ENCODE measurements at regions of chr19 and their contacts with region 1.

Region 1: DNA sequence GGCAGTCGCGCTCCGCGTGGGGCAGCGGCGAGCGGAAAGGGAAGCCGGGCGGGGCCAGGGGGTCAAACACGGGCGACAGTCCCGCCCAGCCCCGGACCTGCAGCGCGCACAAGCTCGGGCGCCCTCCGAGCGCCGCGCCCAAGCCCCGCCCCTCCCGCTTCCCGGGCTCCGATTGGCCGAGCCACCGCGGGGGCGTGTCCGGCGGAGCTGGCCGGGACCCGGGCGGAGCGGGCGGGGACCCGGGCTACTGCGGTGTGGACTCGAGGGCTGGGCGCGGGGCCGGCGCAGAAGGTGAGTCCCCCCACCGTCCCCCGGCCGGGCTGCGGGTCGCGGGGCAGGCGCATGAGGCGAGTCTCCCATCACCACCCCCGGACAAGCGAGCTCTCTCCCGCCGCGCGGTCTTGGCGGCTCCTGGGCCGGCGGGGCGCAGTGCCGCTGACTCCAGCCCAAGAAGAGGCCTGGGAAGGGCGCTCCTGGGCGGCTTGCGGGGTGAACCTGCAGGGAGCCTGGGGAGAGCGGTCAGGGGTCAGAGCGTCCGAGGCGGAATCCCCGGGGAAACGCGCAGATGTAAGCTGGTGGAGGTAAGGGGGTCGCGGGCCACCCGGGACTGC is at the start of gene PLEKHF1:
- DNase-seq: peak; percentile 89
- ATAC-seq: peak; percentile 88
- H3K4me3 Mint-ChIP-seq: peak within 1 kb of the TSS; percentile 86
- H3K27ac Mint-ChIP-seq: peak within 1 kb of the TSS; percentile 90
- H3K4me1 Mint-ChIP-seq: peaks cover 68% of the 10 kb centered on the region
- H3K27me3 Mint-ChIP-seq: no peaks in the 10 kb centered on the region
- total RNA-seq, gene PLEKHF1: 46.0 to 47.7 TPM

Region 2: GRCh38 chr19:29622138-29623070 is 42.9 kb before region 1 on chr19:
- CTCF ChIA-PET with region 1: interaction called, 90 read pairs
- POLR2A ChIA-PET with region 1: interaction called, 11 read pairs
- DNase-seq: peak; percentile 60
- ATAC-seq: peak; percentile 71
- H3K4me3 Mint-ChIP-seq: peak overlapping the region; percentile 81
- H3K27ac Mint-ChIP-seq: peak overlapping the region; percentile 95
- H3K4me1 Mint-ChIP-seq: peaks cover 67% of the 10 kb centered on the region
- H3K27me3 Mint-ChIP-seq: peaks cover 3% of the 10 kb centered on the region

Region 3: GRCh38 chr19:29680447-29680846 is 15.1 kb after region 1 on chr19:
- CTCF ChIA-PET with region 1: interaction called, 59 read pairs
- POLR2A ChIA-PET with region 1: interaction called, 15 read pairs
- DNase-seq: peak; percentile 91
- ATAC-seq: peak; percentile 94
- H3K4me3 Mint-ChIP-seq: peak overlapping the region; percentile 58
- H3K27ac Mint-ChIP-seq: peak overlapping the region; percentile 89
- H3K4me1 Mint-ChIP-seq: peaks cover 79% of the 10 kb centered on the region
- H3K27me3 Mint-ChIP-seq: no peaks in the 10 kb centered on the region

Region 4: DNA sequence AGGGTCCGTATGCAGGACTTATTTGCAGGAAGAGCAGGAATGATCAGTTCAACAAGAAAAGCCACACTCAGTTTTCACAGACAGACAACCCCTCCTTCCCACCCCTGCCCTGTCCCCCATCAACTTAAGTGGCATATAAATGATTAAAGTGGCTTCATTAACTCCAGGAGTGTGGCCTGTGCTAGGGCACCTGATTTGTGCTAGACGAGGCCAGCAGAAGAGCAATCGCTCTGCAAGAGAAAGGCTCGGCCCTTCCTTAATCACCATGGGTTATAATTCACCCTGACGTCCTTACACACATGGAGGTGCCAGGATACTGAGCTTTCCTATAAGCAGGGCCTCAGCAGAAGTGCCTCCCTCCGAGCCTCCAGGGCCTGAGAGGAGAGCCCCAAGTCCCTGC is 35.2 kb after region 1 on chr19:
- CTCF ChIA-PET with region 1: no interaction called
- POLR2A ChIA-PET with region 1: no interaction called
- DNase-seq: no peak
- ATAC-seq: no peak
- H3K4me3 Mint-ChIP-seq: no peak overlapping the region
- H3K27ac Mint-ChIP-seq: no peak overlapping the region
- H3K4me1 Mint-ChIP-seq: peaks cover 17% of the 10 kb centered on the region
- H3K27me3 Mint-ChIP-seq: no peaks in the 10 kb centered on the region

Region 5: DNA sequence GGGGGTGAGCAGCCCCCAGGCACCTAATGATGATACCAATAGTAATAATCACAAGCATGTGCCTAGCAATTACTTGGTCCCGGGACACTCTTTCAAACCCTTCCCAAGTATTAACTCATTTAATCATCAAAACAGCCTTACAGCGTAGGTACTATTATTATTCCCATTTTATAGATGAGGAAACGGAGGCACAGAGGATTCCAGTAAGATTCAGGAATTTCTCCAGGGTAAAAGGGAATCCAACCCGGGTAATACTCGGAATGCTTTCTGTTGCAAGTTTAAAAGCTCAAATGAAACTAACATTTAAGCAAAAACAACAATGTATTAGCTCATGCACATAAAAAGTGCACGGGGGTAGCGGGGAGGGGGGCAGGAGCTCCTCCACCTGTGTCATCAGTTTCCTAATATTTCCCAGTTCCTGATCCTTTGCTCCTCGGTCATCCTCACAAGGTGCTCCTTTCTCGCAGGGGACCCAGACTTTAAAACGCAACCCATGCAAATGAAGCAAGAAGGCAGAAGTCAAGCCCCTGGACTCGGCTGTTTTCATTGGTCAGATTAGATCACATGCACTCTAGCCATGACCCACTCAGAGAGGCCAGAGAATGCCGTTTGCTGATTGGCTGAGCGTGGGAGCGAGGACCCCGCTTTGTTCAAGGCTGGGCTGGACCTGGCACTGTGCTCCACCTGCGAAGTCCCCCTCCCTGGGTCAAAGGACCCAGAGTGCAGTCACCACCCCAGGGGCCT is 88.0 kb after region 1 on chr19:
- CTCF ChIA-PET with region 1: no interaction called
- POLR2A ChIA-PET with region 1: no interaction called
- DNase-seq: no peak
- ATAC-seq: no peak
- H3K4me3 Mint-ChIP-seq: no peak overlapping the region
- H3K27ac Mint-ChIP-seq: no peak overlapping the region
- H3K4me1 Mint-ChIP-seq: no peaks in the 10 kb centered on the region
- H3K27me3 Mint-ChIP-seq: no peaks in the 10 kb centered on the region